A549 (cell line): ENCODE measurements at regions of chr10 and their contacts with region 1.

Region 1: GRCh38 chr10:69716711-69717560 is 84.8 kb upstream of the COL13A1 start:
- DNase-seq: peak; percentile 58 to 84
- ATAC-seq: peak; percentile 84 to 95
- H3K4me3 ChIP-seq: no peak overlapping the region
- H3K27ac ChIP-seq: no peak overlapping the region
- H3K4me1 ChIP-seq: no peaks in the 10 kb centered on the region
- CTCF ChIP-seq: peak; percentile 83
- EP300 ChIP-seq: no peak
- POLR2A ChIP-seq: no peak
- RAD21 ChIP-seq: peak; percentile 81 to 89

Region 2: GRCh38 chr10:69515699-69516259 is 201.2 kb before region 1 on chr10:
- CTCF ChIA-PET with region 1: interaction called, 28 read pairs
- POLR2A ChIA-PET with region 1: no interaction called
- DNase-seq: peak; percentile 78 to 87
- ATAC-seq: peak; percentile 96 to 97
- H3K4me3 ChIP-seq: no peak overlapping the region
- H3K27ac ChIP-seq: no peak overlapping the region
- H3K4me1 ChIP-seq: no peaks in the 10 kb centered on the region
- CTCF ChIP-seq: peak; percentile 82
- EP300 ChIP-seq: no peak
- POLR2A ChIP-seq: no peak
- RAD21 ChIP-seq: peak; percentile 88 to 90

Region 3: GRCh38 chr10:69567920-69568319 is 149.0 kb before region 1 on chr10:
- CTCF ChIA-PET with region 1: no interaction called
- POLR2A ChIA-PET with region 1: no interaction called
- DNase-seq: peak; percentile 24 to 41
- ATAC-seq: peak; percentile 73 to 79; a peak in 5 of 6 replicates
- H3K4me3 ChIP-seq: no peak overlapping the region
- H3K27ac ChIP-seq: no peak overlapping the region
- H3K4me1 ChIP-seq: no peaks in the 10 kb centered on the region; the same call in 2 of the 3 replicates
- CTCF ChIP-seq: no peak
- EP300 ChIP-seq: no peak
- POLR2A ChIP-seq: no peak
- RAD21 ChIP-seq: no peak

Region 4: DNA sequence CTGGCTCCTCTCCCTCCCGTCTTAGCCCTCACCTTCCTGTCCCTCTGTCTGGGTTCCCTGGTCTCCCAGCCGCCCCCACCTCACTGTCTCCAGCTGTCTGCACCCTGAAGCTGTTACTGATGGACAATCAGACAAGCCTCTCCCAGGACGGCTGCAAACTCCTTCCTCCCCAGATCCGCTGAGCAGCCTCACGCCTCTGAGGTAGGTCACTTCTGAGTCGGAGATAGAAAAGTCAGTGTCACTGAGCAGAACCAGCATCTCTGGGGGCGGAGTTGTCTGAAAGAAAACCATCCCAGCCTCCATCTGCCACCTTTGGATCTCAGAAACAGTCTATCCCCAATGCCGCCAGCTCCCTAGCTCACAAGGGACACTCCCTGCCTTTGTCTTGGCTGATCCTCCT is 59.5 kb before region 1 on chr10:
- CTCF ChIA-PET with region 1: interaction called, 11 read pairs
- POLR2A ChIA-PET with region 1: no interaction called
- DNase-seq: no peak
- ATAC-seq: no peak
- H3K4me3 ChIP-seq: no peak overlapping the region
- H3K27ac ChIP-seq: no peak overlapping the region
- H3K4me1 ChIP-seq: no peaks in the 10 kb centered on the region
- CTCF ChIP-seq: no peak
- EP300 ChIP-seq: no peak
- POLR2A ChIP-seq: no peak
- RAD21 ChIP-seq: no peak

Region 5: DNA sequence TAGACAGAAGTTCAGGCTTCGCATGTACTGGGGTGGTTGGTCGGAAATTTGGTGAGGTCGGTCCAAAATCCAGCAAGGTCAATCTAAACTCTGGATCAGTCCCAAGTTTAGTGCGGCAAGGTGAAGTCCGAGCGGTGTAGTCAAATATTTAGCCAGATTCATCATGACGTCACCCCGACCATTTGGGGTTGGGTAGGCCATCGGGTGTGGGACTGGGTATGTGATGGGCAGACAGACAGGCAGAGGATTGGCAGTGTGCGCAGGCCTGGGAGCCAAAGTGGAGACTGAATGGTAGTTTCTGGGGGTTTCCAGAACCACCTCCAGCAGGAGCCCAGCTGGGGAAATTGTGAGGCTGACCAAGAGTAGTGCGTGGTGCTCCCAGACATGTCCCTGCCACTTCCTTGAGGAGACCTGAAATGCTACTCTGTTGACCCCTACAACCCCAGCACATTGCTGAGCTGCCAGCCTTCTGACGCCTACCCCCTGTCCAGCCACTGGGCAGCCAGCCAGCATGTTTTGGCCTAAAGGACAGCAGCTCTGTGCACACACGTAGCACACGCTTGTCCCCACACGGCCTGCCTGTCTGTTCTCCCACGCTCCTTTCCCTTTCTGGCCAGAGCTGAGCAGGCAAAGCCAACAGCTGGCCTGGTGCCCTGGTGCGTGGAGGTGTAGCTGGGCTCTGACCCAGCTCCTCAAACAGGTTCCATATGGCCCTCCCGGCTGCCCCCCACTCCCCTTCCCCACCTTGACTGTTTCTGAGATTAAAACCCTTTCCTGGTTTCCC is 30.9 kb before region 1 on chr10:
- CTCF ChIA-PET with region 1: interaction called, 12 read pairs
- POLR2A ChIA-PET with region 1: no interaction called
- DNase-seq: no peak
- ATAC-seq: no peak
- H3K4me3 ChIP-seq: no peak overlapping the region
- H3K27ac ChIP-seq: no peak overlapping the region
- H3K4me1 ChIP-seq: no peaks in the 10 kb centered on the region
- CTCF ChIP-seq: no peak
- EP300 ChIP-seq: no peak
- POLR2A ChIP-seq: no peak
- RAD21 ChIP-seq: no peak

Region 6: DNA sequence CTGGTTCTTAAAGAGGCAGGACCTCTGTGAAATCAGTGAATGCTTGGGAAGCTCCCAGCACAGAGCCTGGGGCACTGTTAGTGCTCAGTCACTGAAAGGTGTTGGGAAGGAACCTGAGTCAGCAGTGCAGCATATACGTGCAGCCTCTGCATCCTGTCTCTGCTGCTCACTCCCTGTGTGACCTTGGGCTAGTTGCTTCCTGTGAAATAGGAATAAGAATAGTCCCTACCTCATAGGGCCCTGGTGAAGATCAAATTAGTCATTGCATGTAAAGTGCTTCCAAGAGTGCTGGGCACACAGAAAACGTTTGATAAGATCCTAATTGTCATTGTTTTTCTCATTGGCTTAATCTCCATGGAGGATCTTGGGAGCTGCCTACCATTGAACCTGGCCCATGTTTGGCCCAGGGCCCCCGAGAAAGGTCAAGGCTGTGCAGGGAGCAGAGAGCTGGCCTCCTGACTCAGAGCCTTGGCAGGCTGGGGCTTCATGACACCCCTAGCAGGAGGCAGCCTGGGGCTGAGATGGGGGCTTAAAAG is 11.5 kb after region 1 on chr10:
- CTCF ChIA-PET with region 1: interaction called, 43 read pairs
- POLR2A ChIA-PET with region 1: interaction called, 3 read pairs
- DNase-seq: peak in 1 of 2 experiments; percentile 49
- ATAC-seq: peak; percentile 36 to 49; a peak in 3 of 6 replicates
- H3K4me3 ChIP-seq: no peak overlapping the region
- H3K27ac ChIP-seq: no peak overlapping the region
- H3K4me1 ChIP-seq: peaks cover 17% of the 10 kb centered on the region; the same call in 2 of the 3 replicates
- CTCF ChIP-seq: no peak
- EP300 ChIP-seq: no peak
- POLR2A ChIP-seq: no peak
- RAD21 ChIP-seq: no peak